ENCODE measurements at regions of chr3 and their contacts with region 1.

Region 1: GRCh38 chr3:129665024-129665768 is 58.7 kb upstream of the PLXND1 start:
- DNase-seq: no peak
- H3K4me3 ChIP-seq: no peak overlapping the region
- H3K27ac ChIP-seq: no peak overlapping the region
- H3K4me1 ChIP-seq: no peaks in the 10 kb centered on the region
- H3K27me3 ChIP-seq: no peaks in the 10 kb centered on the region
- CTCF ChIP-seq: no peak
- POLR2A ChIP-seq: no peak

Region 2: GRCh38 chr3:129439817-129440617 is 225.2 kb before region 1 on chr3 and contains the starts of genes IFT122 and MBD4:
- CTCF ChIA-PET with region 1: no interaction called
- POLR2A ChIA-PET with region 1: no interaction called
- dilution Hi-C with region 1: no loop called
- intact Hi-C with region 1: no loop called
- DNase-seq: peak; percentile 100
- H3K4me3 ChIP-seq: peak within 1 kb of the TSS; percentile 70 to 81 (median 72)
- H3K27ac ChIP-seq: peak within 1 kb of the TSS; percentile 75
- H3K4me1 ChIP-seq: peaks cover 44% of the 10 kb centered on the region
- H3K27me3 ChIP-seq: no peaks in the 10 kb centered on the region
- CTCF ChIP-seq: no peak
- POLR2A ChIP-seq: peak; percentile 79
- total RNA-seq, gene IFT122: 36.6 and 41.7 TPM in 2 replicates
- total RNA-seq, gene MBD4: 33.2 and 39.5 TPM in 2 replicates

Region 3: GRCh38 chr3:129683201-129683600 is 18.0 kb after region 1 on chr3:
- CTCF ChIA-PET with region 1: interaction called, 5 read pairs
- POLR2A ChIA-PET with region 1: no interaction called
- dilution Hi-C with region 1: no loop called
- intact Hi-C with region 1: loop called (anchors 1 kb)
- DNase-seq: no peak
- H3K4me3 ChIP-seq: no peak overlapping the region
- H3K27ac ChIP-seq: no peak overlapping the region
- H3K4me1 ChIP-seq: no peaks in the 10 kb centered on the region
- H3K27me3 ChIP-seq: no peaks in the 10 kb centered on the region
- CTCF ChIP-seq: no peak
- POLR2A ChIP-seq: no peak

Measured in endothelial cell of umbilical vein (primary cell).